HCT116 (cell line): ENCODE measurements at regions of chr17 and their contacts with region 1.

Region 1: GRCh38 chr17:75749545-75750389 is 15.2 kb downstream of the GALK1 start:
- DNase-seq: no peak
- ATAC-seq: peak; percentile 81
- H3K4me3 ChIP-seq: no peak overlapping the region
- H3K27ac ChIP-seq: peak overlapping the region; percentile 41; the same call in 1 of the 2 replicates
- H3K4me1 ChIP-seq: peaks cover 0 to 3% of the 10 kb centered on the region in 2 experiments; a peak in 1 of 4 replicates
- H3K27me3 ChIP-seq: no peaks in the 10 kb centered on the region
- CTCF ChIP-seq: peak; percentile 85 to 98 (median 95)
- POLR2A ChIP-seq: no peak
- RAD21 ChIP-seq: peak; percentile 83

Region 2: DNA sequence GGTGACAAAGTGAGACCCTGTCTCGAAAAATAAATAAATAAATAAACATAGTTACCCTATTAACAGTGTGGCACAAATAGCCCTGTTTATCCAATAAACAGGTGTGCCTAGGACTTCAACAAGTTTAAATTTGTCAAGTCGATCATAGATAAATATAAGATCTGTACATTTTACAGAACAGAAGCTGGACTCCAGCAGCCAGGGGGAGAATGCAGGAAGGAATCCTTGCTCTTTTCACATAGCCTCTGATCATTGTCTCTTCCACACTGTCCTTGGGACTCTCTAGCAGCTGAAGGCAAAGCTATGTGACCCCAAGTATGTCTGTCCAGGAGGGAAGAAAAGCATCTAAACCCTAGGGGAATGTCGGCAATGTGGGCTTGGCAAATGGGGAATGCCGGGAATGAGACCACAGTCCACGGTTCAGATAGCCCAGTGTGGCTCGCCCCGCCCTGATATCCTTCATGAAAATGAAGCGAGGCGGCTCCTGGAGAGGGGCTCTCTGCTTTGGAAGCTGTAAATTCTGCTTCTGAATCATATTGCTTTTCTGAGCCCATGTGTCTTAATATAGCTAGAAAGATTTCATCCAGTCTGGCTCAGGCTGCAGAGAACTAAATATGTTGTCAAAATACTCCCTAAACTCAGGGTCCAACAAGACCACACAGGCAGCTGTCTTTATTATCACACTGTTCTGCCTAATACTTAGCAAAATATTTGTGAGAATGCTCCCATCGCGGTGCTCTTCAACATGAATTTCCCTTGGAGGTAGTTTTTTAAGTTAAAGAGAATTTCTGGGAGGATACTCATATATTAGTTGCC is 319.4 kb before region 1 on chr17:
- CTCF ChIA-PET with region 1: interaction called, 4 read pairs
- POLR2A ChIA-PET with region 1: no interaction called
- RAD21 ChIA-PET with region 1: no interaction called
- intact Hi-C with region 1: loop called (anchors 10 kb)
- DNase-seq: no peak
- ATAC-seq: peak; percentile 66
- H3K4me3 ChIP-seq: peak overlapping the region in 1 of 2 experiments; percentile 43; a peak in 2 of 4 replicates
- H3K27ac ChIP-seq: peak overlapping the region; percentile 48; the same call in 1 of the 2 replicates
- H3K4me1 ChIP-seq: peaks cover 33 to 46% of the 10 kb centered on the region in 2 experiments
- H3K27me3 ChIP-seq: no peaks in the 10 kb centered on the region
- CTCF ChIP-seq: no peak
- POLR2A ChIP-seq: no peak
- RAD21 ChIP-seq: no peak

Region 3: GRCh38 chr17:75645889-75646637 is 103.7 kb before region 1 on chr17:
- CTCF ChIA-PET with region 1: interaction called, 35 read pairs
- POLR2A ChIA-PET with region 1: no interaction called
- RAD21 ChIA-PET with region 1: interaction called in 1 of 2 experiments, 3 read pairs
- intact Hi-C with region 1: no loop called
- DNase-seq: peak; percentile 64
- ATAC-seq: peak; percentile 89
- H3K4me3 ChIP-seq: peak overlapping the region; percentile 8 to 55
- H3K27ac ChIP-seq: peak overlapping the region; percentile 77
- H3K4me1 ChIP-seq: peaks cover 34 to 60% of the 10 kb centered on the region in 2 experiments
- H3K27me3 ChIP-seq: no peaks in the 10 kb centered on the region
- CTCF ChIP-seq: no peak
- POLR2A ChIP-seq: no peak
- RAD21 ChIP-seq: no peak

Region 4: DNA sequence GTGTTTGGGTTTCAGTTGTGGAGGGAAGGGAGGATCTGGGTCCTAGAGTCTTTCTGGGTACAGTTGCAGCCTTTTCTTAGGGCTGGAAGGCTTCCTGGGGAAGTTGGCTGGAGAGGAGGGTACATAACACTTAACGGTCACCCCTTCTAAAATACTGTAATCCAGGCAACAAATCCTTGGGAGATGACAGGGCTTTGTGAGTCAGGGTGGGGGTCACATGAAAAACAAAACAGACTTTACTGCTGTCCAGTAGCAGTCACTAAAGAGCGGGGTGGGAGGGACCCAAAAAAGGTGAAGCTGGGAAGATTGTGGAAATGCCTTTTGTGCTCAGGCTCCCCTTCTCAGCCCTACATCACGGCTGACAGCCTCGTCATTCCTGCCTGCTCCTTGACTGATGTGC is 76.3 kb before region 1 on chr17:
- CTCF ChIA-PET with region 1: interaction called, 174 read pairs
- POLR2A ChIA-PET with region 1: no interaction called
- RAD21 ChIA-PET with region 1: interaction called, 8 to 10 read pairs
- intact Hi-C with region 1: loop called (anchors 1 kb)
- DNase-seq: no peak
- ATAC-seq: peak; percentile 24
- H3K4me3 ChIP-seq: no peak overlapping the region
- H3K27ac ChIP-seq: 0 out of 2 replicates have a peak overlapping the region, but pooled peaks have one; percentile 4
- H3K4me1 ChIP-seq: peaks cover 2 to 20% of the 10 kb centered on the region in 2 experiments; a peak in 3 of 4 replicates
- H3K27me3 ChIP-seq: no peaks in the 10 kb centered on the region
- CTCF ChIP-seq: no peak
- POLR2A ChIP-seq: no peak
- RAD21 ChIP-seq: no peak

Region 5: DNA sequence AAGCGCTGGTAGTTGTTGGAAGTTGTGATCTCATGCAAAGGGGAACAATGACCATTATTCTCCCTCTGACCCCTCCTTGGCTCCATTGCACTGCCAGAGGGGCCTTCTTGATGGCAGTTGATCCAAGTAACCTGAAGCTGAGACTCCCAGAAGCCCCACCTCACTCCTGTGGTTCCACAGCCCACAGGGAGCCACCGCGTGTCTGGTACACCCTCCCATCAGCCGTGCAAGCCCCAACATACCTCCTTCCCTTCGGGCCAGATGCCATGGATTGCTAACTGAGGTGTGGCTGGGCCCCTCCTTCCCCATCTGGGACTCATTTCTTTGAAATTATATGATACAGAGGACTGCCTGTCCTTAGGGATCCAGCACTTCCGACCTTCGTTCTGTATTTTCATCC is 64.8 kb before region 1 on chr17:
- CTCF ChIA-PET with region 1: interaction called, 174 read pairs
- POLR2A ChIA-PET with region 1: interaction called, 8 read pairs
- RAD21 ChIA-PET with region 1: interaction called, 10 to 13 read pairs
- intact Hi-C with region 1: no loop called
- DNase-seq: no peak
- ATAC-seq: peak; percentile 70
- H3K4me3 ChIP-seq: peak overlapping the region in 1 of 2 experiments; percentile 45; a peak in 3 of 4 replicates
- H3K27ac ChIP-seq: peak overlapping the region; percentile 67
- H3K4me1 ChIP-seq: peaks cover 71 to 100% of the 10 kb centered on the region in 2 experiments
- H3K27me3 ChIP-seq: no peaks in the 10 kb centered on the region
- CTCF ChIP-seq: no peak
- POLR2A ChIP-seq: no peak
- RAD21 ChIP-seq: no peak

Region 6: GRCh38 chr17:75720725-75721462 is 28.9 kb before region 1 on chr17 and contains the start of gene ITGB4:
- CTCF ChIA-PET with region 1: interaction called, 26 read pairs
- POLR2A ChIA-PET with region 1: interaction called, 4 read pairs
- RAD21 ChIA-PET with region 1: interaction called in 1 of 2 experiments, 3 read pairs
- intact Hi-C with region 1: no loop called
- DNase-seq: peak; percentile 72
- ATAC-seq: peak; percentile 88
- H3K4me3 ChIP-seq: peak within 1 kb of the TSS; percentile 87 to 95
- H3K27ac ChIP-seq: peak within 1 kb of the TSS; percentile 94
- H3K4me1 ChIP-seq: peaks cover 27 to 43% of the 10 kb centered on the region in 2 experiments
- H3K27me3 ChIP-seq: no peaks in the 10 kb centered on the region
- CTCF ChIP-seq: no peak
- POLR2A ChIP-seq: no peak
- RAD21 ChIP-seq: no peak; the same call in 1 of the 2 replicates
- total RNA-seq, gene ITGB4: 568 TPM

Region 7: GRCh38 chr17:75987007-75987406 is 237.2 kb after region 1 on chr17:
- CTCF ChIA-PET with region 1: no interaction called
- POLR2A ChIA-PET with region 1: no interaction called
- RAD21 ChIA-PET with region 1: no interaction called
- intact Hi-C with region 1: no loop called
- DNase-seq: no peak
- ATAC-seq: 0 out of 2 replicates have a peak, but pooled peaks have one; percentile 21
- H3K4me3 ChIP-seq: no peak overlapping the region
- H3K27ac ChIP-seq: no peak overlapping the region
- H3K4me1 ChIP-seq: peaks cover 6 to 18% of the 10 kb centered on the region in 2 experiments; a peak in 2 of 4 replicates
- H3K27me3 ChIP-seq: no peaks in the 10 kb centered on the region
- CTCF ChIP-seq: no peak
- POLR2A ChIP-seq: no peak
- RAD21 ChIP-seq: no peak